ENCODE measurements at regions of chr5 and their contacts with region 1.

Region 1: DNA sequence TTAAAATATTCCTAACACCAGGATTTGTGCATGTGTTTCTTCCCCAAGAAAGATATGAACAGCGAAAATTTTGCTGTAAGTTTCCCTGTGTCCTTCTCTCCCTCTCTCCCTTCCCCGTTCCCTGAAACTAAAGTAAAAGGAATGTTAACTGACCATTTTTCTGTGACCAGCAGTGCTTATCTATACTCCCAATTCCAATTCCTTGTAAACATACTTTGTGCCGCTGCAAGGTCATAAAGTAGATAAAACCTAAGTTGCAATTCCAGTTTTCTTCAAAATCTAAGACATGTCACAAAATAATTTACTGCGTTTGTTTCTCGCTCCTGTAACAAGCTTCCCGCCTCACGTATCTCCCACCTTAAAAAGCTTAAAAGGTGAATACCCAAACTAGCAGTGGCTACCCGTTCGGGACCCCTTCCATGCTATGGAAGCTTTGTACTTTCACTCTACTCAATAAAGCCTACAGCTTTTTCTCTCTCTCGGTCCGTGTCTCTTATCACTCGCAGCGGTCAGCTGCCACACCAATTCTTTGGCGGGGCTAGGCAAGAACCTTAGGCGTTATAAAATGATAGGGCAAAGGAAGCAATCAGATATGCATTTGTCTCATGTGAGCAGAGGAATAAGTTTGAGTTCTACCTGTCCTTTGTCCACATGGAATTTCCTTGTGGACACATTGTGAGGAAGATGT is 1798.0 kb downstream of the EFNA5 start:
- DNase-seq: no peak
- ATAC-seq: no peak
- H3K4me3 ChIP-seq: no peak overlapping the region
- H3K27ac ChIP-seq: no peak overlapping the region
- H3K4me1 ChIP-seq: no peaks in the 10 kb centered on the region
- H3K27me3 ChIP-seq: no peaks in the 10 kb centered on the region; a peak in 1 of 5 replicates
- CTCF ChIP-seq: no peak
- EP300 ChIP-seq: no peak
- POLR2A ChIP-seq: no peak
- RAD21 ChIP-seq: no peak

Region 2: DNA sequence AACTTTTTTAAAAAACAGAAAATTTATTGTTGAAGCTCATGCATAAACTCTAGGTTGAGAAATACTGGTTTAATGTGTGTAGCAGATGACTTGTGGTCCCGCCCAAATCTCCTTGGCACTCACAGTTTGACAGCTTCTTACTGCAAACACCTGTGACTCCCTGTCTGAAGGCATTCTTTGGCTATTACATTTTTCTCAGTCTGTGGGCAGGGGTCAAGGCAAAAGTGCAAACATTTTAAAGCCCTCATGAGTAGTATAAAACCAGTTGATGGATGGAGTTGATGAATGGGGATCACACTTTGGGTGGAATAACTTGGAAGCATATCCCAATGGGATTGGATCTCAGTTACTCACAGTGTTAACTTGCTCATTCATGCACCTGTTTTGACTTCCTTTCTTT is 1303.1 kb before region 1 on chr5:
- CTCF ChIA-PET with region 1: no interaction called
- POLR2A ChIA-PET with region 1: no interaction called
- in situ Hi-C with region 1: no loop called
- intact Hi-C with region 1: loop called (anchors 5 kb)
- DNase-seq: no peak
- ATAC-seq: no peak
- H3K4me3 ChIP-seq: no peak overlapping the region
- H3K27ac ChIP-seq: no peak overlapping the region
- H3K4me1 ChIP-seq: no peaks in the 10 kb centered on the region
- H3K27me3 ChIP-seq: no peaks in the 10 kb centered on the region
- CTCF ChIP-seq: no peak
- EP300 ChIP-seq: no peak
- POLR2A ChIP-seq: no peak
- RAD21 ChIP-seq: no peak

Region 3: DNA sequence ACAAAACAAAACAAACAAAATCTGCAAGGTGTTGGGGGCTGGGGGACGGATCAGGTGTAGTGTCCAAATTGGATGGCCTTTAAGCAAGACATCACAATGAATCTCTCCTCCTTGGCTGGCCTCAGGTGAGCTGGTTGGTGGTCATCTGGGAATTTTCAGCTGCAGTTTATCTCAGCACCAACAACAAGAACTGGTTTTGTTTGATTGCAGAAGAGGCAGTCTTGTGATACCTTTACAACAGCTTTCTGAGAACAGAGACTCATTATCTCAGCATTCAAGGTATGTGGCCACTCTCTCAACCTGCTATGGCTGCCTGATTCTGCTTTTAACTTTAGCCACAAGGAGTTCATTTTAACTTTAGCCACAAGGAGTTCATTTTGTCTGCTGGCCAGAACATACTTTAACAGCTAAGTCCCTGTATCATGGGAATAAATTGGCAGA is 254.6 kb after region 1 on chr5:
- CTCF ChIA-PET with region 1: no interaction called
- POLR2A ChIA-PET with region 1: no interaction called
- in situ Hi-C with region 1: no loop called
- intact Hi-C with region 1: no loop called
- DNase-seq: no peak
- ATAC-seq: no peak
- H3K4me3 ChIP-seq: no peak overlapping the region
- H3K27ac ChIP-seq: no peak overlapping the region
- H3K4me1 ChIP-seq: no peaks in the 10 kb centered on the region
- H3K27me3 ChIP-seq: no peaks in the 10 kb centered on the region
- CTCF ChIP-seq: no peak
- EP300 ChIP-seq: no peak
- POLR2A ChIP-seq: no peak
- RAD21 ChIP-seq: no peak

Measured in HepG2 (cell line).